Prostate gland (tissue), 2 donors: ENCODE measurements at regions of chr1 and their contacts with region 1.

Region 1: DNA sequence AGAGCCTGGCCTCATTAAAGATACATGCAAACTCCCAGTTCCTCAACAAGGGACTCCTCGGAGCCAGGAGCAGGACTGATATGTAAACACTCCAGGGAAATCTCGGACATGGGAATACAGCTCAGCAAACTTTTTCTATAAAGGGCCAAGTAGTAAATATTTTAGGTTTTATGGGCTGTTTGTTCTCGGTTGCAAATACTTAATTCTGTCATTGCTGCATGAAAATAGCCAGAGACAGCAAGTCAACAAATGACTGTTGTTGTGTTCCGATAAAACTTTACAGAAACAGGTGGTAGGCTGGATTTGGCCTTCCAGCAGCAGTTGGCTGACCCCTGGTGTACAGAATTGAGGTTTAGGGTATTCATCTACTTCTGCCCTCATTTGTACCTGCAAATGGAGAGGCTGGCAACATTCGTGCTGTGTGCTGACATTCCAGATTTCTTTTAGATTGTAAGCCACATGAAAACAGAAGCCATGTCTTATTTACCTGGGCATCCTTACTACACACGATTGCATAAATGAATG is 360.3 kb downstream of the NTNG1 start:
- DNase-seq: no peak
- H3K4me3 ChIP-seq: no peak overlapping the region
- H3K27ac ChIP-seq: no peak overlapping the region
- H3K4me1 ChIP-seq: no peaks in the 10 kb centered on the region
- H3K27me3 ChIP-seq: no peaks in the 10 kb centered on the region
- CTCF ChIP-seq: no peak
- POLR2A ChIP-seq: no peak

Region 2: GRCh38 chr1:107362468-107363140 is 138.5 kb before region 1 on chr1:
- intact Hi-C with region 1: loop called (anchors 10 kb)
- DNase-seq: no peak
- H3K4me3 ChIP-seq: no peak overlapping the region
- H3K27ac ChIP-seq: no peak overlapping the region
- H3K4me1 ChIP-seq: no peaks in the 10 kb centered on the region
- H3K27me3 ChIP-seq: no peaks in the 10 kb centered on the region
- CTCF ChIP-seq: no peak
- POLR2A ChIP-seq: no peak

Region 3: GRCh38 chr1:107547363-107548155 is 46.4 kb after region 1 on chr1:
- intact Hi-C with region 1: no loop called
- DNase-seq: no peak
- H3K4me3 ChIP-seq: no peak overlapping the region
- H3K27ac ChIP-seq: no peak overlapping the region
- H3K4me1 ChIP-seq: no peaks in the 10 kb centered on the region
- H3K27me3 ChIP-seq: no peaks in the 10 kb centered on the region
- CTCF ChIP-seq: no peak
- POLR2A ChIP-seq: no peak

Region 4: DNA sequence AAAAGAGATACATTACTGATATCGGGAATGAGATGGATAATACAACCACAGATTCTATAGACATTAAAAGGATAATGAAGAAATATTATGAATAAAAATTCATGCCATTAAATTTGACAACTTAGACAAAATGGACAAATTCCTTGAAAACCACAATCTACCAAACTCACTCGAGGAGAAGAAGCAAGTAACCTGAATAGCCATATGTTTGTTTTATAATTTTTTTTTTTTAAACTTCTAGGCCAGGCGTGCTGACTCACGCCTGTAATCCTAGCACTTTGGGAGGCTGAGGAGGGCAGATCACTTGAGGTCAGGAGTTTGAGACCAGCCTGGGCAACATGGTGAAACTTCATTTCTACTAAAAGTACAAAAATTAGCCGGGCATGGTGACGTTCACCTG is 136.0 kb after region 1 on chr1:
- intact Hi-C with region 1: no loop called
- DNase-seq: no peak
- H3K4me3 ChIP-seq: no peak overlapping the region
- H3K27ac ChIP-seq: no peak overlapping the region
- H3K4me1 ChIP-seq: no peaks in the 10 kb centered on the region
- H3K27me3 ChIP-seq: no peaks in the 10 kb centered on the region
- CTCF ChIP-seq: no peak
- POLR2A ChIP-seq: no peak